GM12878 (cell line): ENCODE measurements at regions of chr2 and their contacts with region 1.

Region 1: GRCh38 chr2:116510158-116510557 is 1304.3 kb upstream of the DDX18 start:
- DNase-seq: no peak
- ATAC-seq: peak; percentile 60
- H3K4me3 ChIP-seq: no peak overlapping the region
- H3K27ac ChIP-seq: no peak overlapping the region
- H3K4me1 ChIP-seq: no peaks in the 10 kb centered on the region
- H3K27me3 ChIP-seq: no peaks in the 10 kb centered on the region
- CTCF ChIP-seq: peak; percentile 35 to 43 (median 42); a peak in 5 of 6 replicates
- EP300 ChIP-seq: no peak
- POLR2A ChIP-seq: no peak
- RAD21 ChIP-seq: peak; percentile 32; the same call in 1 of the 2 replicates

Region 2: DNA sequence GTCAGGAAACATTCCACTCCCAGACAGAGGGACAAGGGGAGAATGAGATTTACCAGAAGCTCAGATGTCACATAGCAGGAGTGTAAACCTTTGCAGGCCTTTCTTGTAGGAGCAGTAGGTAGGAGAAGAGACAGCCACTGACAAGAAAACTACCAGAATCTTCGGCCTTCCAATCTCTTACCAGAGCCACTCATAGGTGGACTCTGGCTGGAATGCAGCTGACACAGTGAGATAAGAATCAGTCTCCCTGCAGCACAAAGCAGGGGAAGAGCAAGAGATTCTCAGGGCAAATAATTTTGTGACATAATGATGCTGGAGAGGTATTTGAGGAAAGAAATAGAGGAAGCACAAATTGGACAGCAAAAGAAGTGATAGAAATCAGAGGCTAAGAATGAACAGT is 533.2 kb before region 1 on chr2:
- CTCF ChIA-PET with region 1: no interaction called
- POLR2A ChIA-PET with region 1: no interaction called
- RAD21 ChIA-PET with region 1: no interaction called
- SMC1A ChIA-PET with region 1: no interaction called
- in situ Hi-C with region 1: no loop called
- intact Hi-C with region 1: no loop called
- DNase-seq: no peak
- ATAC-seq: no peak
- H3K4me3 ChIP-seq: no peak overlapping the region
- H3K27ac ChIP-seq: no peak overlapping the region
- H3K4me1 ChIP-seq: no peaks in the 10 kb centered on the region
- H3K27me3 ChIP-seq: no peaks in the 10 kb centered on the region
- CTCF ChIP-seq: no peak
- EP300 ChIP-seq: no peak
- POLR2A ChIP-seq: no peak
- RAD21 ChIP-seq: no peak

Region 3: DNA sequence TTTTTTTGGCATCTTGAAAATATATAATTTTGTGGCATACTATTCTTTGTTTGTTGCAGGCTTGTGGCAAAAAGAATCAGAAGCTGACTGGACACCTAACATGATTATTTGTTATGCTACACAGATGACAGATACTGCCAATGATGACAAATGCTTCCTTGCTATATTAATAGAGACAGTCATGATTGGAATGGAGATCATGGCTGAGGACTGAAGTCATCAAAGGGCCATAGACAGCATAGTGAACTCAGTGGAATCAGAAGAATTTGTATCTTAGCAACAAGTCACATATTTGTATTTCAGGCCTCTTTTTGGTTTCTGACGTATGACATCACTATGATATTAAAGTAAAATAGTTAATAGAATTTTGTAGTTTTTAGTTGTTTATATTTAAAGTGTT is 300.5 kb after region 1 on chr2:
- CTCF ChIA-PET with region 1: no interaction called
- POLR2A ChIA-PET with region 1: no interaction called
- RAD21 ChIA-PET with region 1: no interaction called
- SMC1A ChIA-PET with region 1: no interaction called
- in situ Hi-C with region 1: no loop called
- intact Hi-C with region 1: no loop called
- DNase-seq: no peak
- ATAC-seq: no peak
- H3K4me3 ChIP-seq: no peak overlapping the region
- H3K27ac ChIP-seq: no peak overlapping the region
- H3K4me1 ChIP-seq: no peaks in the 10 kb centered on the region
- H3K27me3 ChIP-seq: no peaks in the 10 kb centered on the region
- CTCF ChIP-seq: no peak
- EP300 ChIP-seq: no peak
- POLR2A ChIP-seq: no peak
- RAD21 ChIP-seq: no peak

Region 4: GRCh38 chr2:117771969-117772630 is 1261.9 kb after region 1 on chr2:
- CTCF ChIA-PET with region 1: no interaction called
- POLR2A ChIA-PET with region 1: no interaction called
- RAD21 ChIA-PET with region 1: no interaction called
- SMC1A ChIA-PET with region 1: no interaction called
- in situ Hi-C with region 1: loop called (anchors 25 kb)
- intact Hi-C with region 1: loop called (anchors 5 kb)
- DNase-seq: no peak
- ATAC-seq: peak; percentile 63; the same call in 2 of the 3 replicates
- H3K4me3 ChIP-seq: no peak overlapping the region
- H3K27ac ChIP-seq: no peak overlapping the region
- H3K4me1 ChIP-seq: no peaks in the 10 kb centered on the region
- H3K27me3 ChIP-seq: no peaks in the 10 kb centered on the region
- CTCF ChIP-seq: peak; percentile 33 to 60 (median 41); a peak in 5 of 6 replicates
- EP300 ChIP-seq: no peak
- POLR2A ChIP-seq: no peak
- RAD21 ChIP-seq: peak; percentile 66

Region 5: GRCh38 chr2:117785740-117786139 is 1275.6 kb after region 1 on chr2:
- CTCF ChIA-PET with region 1: no interaction called
- POLR2A ChIA-PET with region 1: no interaction called
- RAD21 ChIA-PET with region 1: no interaction called
- SMC1A ChIA-PET with region 1: no interaction called
- in situ Hi-C with region 1: no loop called
- intact Hi-C with region 1: loop called (anchors 5 kb)
- DNase-seq: no peak
- ATAC-seq: peak; percentile 80
- H3K4me3 ChIP-seq: no peak overlapping the region
- H3K27ac ChIP-seq: no peak overlapping the region
- H3K4me1 ChIP-seq: no peaks in the 10 kb centered on the region
- H3K27me3 ChIP-seq: no peaks in the 10 kb centered on the region
- CTCF ChIP-seq: peak; percentile 56 to 67 (median 62)
- EP300 ChIP-seq: no peak
- POLR2A ChIP-seq: no peak
- RAD21 ChIP-seq: peak; percentile 76